ENCODE measurements at regions of chr2 and their contacts with region 1.

Region 1: DNA sequence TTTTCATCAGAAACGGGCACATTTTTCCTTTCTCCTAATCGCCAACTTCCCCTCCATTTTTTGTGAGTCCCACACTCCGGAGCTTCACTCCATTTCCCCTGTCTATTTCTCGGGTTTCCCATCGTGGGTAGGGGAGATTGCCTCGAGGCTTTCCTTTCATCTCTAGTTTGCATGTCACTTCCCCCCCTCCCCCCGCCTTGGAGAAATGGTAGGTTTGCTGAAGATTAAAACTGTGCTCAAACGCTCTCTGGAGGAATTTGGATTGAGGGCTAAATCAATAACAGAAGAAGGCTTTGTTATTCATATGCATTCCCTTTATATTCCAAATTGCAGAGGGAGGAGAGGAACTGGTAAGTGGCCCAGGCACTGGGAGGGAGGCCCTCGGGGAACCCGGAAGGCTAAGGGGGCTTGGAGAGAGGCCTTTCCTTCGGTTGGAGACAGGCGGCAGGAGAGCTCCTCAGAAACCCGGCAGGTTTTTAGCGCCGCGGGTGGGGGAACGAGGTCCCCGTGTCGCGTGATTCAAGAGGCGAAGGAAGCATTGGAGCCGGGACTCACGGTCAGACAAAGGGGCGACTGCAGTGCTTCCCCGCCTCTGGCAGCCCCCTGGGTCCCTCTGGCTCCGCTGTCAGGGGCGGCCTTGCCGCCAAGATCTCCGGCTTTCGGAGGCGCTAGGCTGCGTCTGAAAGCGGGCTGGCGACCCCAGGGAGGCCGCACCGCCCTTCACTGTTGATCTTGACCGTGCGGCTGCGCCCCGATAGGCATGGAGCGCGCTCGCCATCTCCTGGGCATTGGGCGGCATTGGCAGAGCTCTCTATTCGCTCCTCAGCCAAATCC is 2.4 kb upstream of the HOXD12 start:
- DNase-seq: peak; percentile 82
- ATAC-seq: peak; percentile 77

Region 2: DNA sequence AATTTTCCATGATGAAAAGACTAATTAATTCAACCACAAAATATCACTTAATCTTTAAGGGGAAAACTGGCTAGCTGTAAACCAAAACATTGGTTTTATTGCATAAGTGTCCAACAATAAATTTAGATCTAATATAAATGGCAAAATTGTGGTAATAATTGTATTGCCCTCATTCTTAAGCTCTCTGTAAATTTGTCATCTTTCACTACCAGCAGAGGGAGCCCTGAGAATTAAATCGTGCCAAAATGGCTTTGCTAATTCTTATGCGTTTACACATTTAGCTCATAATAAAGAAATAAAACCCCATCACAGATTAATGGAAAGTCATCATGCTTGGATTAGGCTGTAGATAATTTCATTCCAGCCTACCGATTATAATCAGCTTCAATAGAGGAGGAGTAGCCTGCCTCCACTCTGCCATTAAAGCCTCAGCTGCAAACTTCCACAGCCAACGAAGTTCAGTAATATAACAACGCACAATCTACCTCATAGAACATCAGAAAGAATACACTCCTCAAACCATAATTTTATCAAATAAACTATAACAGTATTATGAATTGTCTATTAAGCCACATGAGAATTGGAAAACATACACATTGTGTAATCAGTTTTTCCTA is 845.7 kb before region 1 on chr2:
- intact Hi-C with region 1: loop called (anchors 10 kb)
- DNase-seq: no peak
- ATAC-seq: no peak

Region 3: GRCh38 chr2:175366815-175367214 is 730.4 kb before region 1 on chr2:
- intact Hi-C with region 1: loop called (anchors 2 kb)
- DNase-seq: no peak
- ATAC-seq: peak; percentile 59

Region 4: DNA sequence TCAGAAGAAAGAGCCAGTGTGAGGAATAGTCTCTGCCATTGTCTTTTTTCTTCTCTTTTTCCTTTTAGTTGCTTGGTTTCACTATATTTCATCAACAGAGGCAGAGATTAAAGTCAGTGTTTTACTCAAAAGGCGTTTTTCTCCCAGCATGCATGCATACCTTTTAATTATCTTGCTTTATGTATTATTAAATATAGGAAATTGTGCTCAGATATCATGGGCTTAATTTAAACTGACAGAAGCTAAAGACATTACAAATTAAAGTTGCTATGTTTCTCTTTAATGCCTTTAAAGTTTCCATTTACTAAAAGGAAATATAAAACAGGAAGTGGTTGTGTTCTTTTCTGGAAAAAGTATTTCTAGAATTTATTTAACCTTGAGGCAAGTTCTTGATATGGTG is 692.4 kb before region 1 on chr2:
- intact Hi-C with region 1: no loop called
- DNase-seq: no peak
- ATAC-seq: no peak

Region 5: GRCh38 chr2:177353187-177353478 is 1255.9 kb after region 1 on chr2:
- intact Hi-C with region 1: no loop called
- DNase-seq: no peak
- ATAC-seq: peak; percentile 39